Activated CD4-positive, alpha-beta T cell treated with anti-CD3 and anti-CD28 coated beads for 36 hours (primary cell): ENCODE measurements at regions of chr2 and their contacts with region 1.

Region 1: GRCh38 chr2:74334931-74335333 is 8.3 kb downstream of the SLC4A5 start:
- DNase-seq: peak; percentile 86
- ATAC-seq: peak; percentile 81
- H3K4me3 Mint-ChIP-seq: no peak overlapping the region
- H3K27ac Mint-ChIP-seq: no peak overlapping the region
- H3K4me1 Mint-ChIP-seq: no peaks in the 10 kb centered on the region
- H3K27me3 Mint-ChIP-seq: no peaks in the 10 kb centered on the region

Region 2: GRCh38 chr2:74250189-74250631 is 84.7 kb before region 1 on chr2:
- CTCF ChIA-PET with region 1: interaction called, 103 read pairs
- POLR2A ChIA-PET with region 1: no interaction called
- intact Hi-C with region 1: loop called (anchors 1 kb)
- DNase-seq: peak; percentile 75
- ATAC-seq: peak; percentile 78
- H3K4me3 Mint-ChIP-seq: no peak overlapping the region
- H3K27ac Mint-ChIP-seq: no peak overlapping the region
- H3K4me1 Mint-ChIP-seq: no peaks in the 10 kb centered on the region
- H3K27me3 Mint-ChIP-seq: no peaks in the 10 kb centered on the region

Region 3: DNA sequence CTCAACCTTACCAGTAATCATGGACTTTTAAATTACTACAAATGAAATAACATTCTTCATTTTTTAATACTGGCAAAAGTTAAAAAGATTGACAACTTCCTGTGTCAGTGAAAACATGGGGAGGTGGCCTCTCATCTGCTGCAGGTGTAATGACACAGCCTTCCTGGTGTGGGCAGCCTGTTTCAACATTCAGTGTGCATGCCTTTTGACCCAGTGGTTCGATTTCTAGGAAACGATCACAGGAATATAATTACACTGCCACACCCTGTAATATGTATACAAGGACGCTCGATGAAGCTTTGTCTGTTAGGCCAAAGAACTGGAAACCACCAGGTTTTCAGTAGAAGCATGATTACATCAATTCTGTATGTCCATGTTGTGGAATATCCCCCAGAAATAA is 67.9 kb before region 1 on chr2:
- CTCF ChIA-PET with region 1: interaction called, 22 read pairs
- POLR2A ChIA-PET with region 1: no interaction called
- intact Hi-C with region 1: loop called (anchors 1 kb)
- DNase-seq: peak; percentile 79
- ATAC-seq: peak; percentile 100
- H3K4me3 Mint-ChIP-seq: no peak overlapping the region
- H3K27ac Mint-ChIP-seq: peak overlapping the region; percentile 83
- H3K4me1 Mint-ChIP-seq: peaks cover 9% of the 10 kb centered on the region
- H3K27me3 Mint-ChIP-seq: no peaks in the 10 kb centered on the region

Region 4: GRCh38 chr2:74290466-74291217 is 44.3 kb before region 1 on chr2:
- CTCF ChIA-PET with region 1: interaction called, 12 read pairs
- POLR2A ChIA-PET with region 1: no interaction called
- intact Hi-C with region 1: no loop called
- DNase-seq: peak; percentile 39
- ATAC-seq: peak; percentile 79
- H3K4me3 Mint-ChIP-seq: no peak overlapping the region
- H3K27ac Mint-ChIP-seq: peak overlapping the region; percentile 77
- H3K4me1 Mint-ChIP-seq: peaks cover 17% of the 10 kb centered on the region
- H3K27me3 Mint-ChIP-seq: no peaks in the 10 kb centered on the region

Region 5: GRCh38 chr2:74345272-74345943 is 10.5 kb after region 1 on chr2:
- CTCF ChIA-PET with region 1: interaction called, 23 read pairs
- POLR2A ChIA-PET with region 1: interaction called, 4 read pairs
- intact Hi-C with region 1: no loop called
- DNase-seq: no peak
- ATAC-seq: no peak
- H3K4me3 Mint-ChIP-seq: no peak overlapping the region
- H3K27ac Mint-ChIP-seq: no peak overlapping the region
- H3K4me1 Mint-ChIP-seq: no peaks in the 10 kb centered on the region
- H3K27me3 Mint-ChIP-seq: no peaks in the 10 kb centered on the region

Region 6: GRCh38 chr2:74391580-74392448 is 56.9 kb after region 1 on chr2:
- CTCF ChIA-PET with region 1: interaction called, 16 read pairs
- POLR2A ChIA-PET with region 1: no interaction called
- intact Hi-C with region 1: no loop called
- DNase-seq: peak; percentile 98
- ATAC-seq: peak; percentile 78
- H3K4me3 Mint-ChIP-seq: peak overlapping the region; percentile 86
- H3K27ac Mint-ChIP-seq: peak overlapping the region; percentile 99
- H3K4me1 Mint-ChIP-seq: peaks cover 7% of the 10 kb centered on the region
- H3K27me3 Mint-ChIP-seq: no peaks in the 10 kb centered on the region

Region 7: GRCh38 chr2:74529357-74530238 is 194.7 kb after region 1 on chr2 and contains the starts of genes AUP1 and HTRA2:
- CTCF ChIA-PET with region 1: interaction called, 4 read pairs
- POLR2A ChIA-PET with region 1: no interaction called
- intact Hi-C with region 1: loop called in 1 of 2 experiments (anchors 5 kb)
- DNase-seq: peak; percentile 97
- ATAC-seq: peak; percentile 90
- H3K4me3 Mint-ChIP-seq: peak within 1 kb of the TSS; percentile 100
- H3K27ac Mint-ChIP-seq: peak within 1 kb of the TSS; percentile 98
- H3K4me1 Mint-ChIP-seq: peaks cover 35% of the 10 kb centered on the region
- H3K27me3 Mint-ChIP-seq: no peaks in the 10 kb centered on the region
- total RNA-seq, gene AUP1: 92.0 to 122 TPM
- total RNA-seq, gene HTRA2: 43.5 to 47.7 TPM

Region 8: DNA sequence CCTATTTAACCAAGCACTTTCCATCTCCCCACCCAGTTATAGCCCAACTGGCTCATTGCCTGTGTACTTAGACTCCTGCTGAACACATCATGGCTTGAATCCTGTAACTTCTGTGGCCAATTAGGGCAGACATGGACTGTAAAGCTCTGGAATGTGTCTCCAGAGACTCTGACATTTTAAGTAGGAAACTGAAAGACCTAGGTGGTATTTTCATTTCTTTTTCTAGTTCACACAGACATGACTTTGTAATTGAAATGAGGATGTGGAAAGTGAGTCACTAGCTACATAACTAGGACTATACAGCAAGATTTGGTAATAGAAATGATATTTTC is 231.8 kb after region 1 on chr2:
- CTCF ChIA-PET with region 1: no interaction called
- POLR2A ChIA-PET with region 1: no interaction called
- intact Hi-C with region 1: no loop called
- DNase-seq: no peak
- ATAC-seq: peak; percentile 65
- H3K4me3 Mint-ChIP-seq: no peak overlapping the region
- H3K27ac Mint-ChIP-seq: peak overlapping the region; percentile 78
- H3K4me1 Mint-ChIP-seq: peaks cover 32% of the 10 kb centered on the region
- H3K27me3 Mint-ChIP-seq: peaks cover 25% of the 10 kb centered on the region